ENCODE measurements at regions of chr19 and their contacts with region 1.

Region 1: GRCh38 chr19:45340232-45340898 is at the start of gene KLC3:
- DNase-seq: peak; percentile 53
- H3K4me3 ChIP-seq: peak within 1 kb of the TSS; percentile 59 to 88 (median 72)
- H3K27ac ChIP-seq: peak within 1 kb of the TSS; percentile 38
- H3K4me1 ChIP-seq: peaks cover 22% of the 10 kb centered on the region
- H3K27me3 ChIP-seq: no peaks in the 10 kb centered on the region
- CTCF ChIP-seq: no peak
- total RNA-seq, gene KLC3: 39.3 to 56.5 TPM

Region 2: DNA sequence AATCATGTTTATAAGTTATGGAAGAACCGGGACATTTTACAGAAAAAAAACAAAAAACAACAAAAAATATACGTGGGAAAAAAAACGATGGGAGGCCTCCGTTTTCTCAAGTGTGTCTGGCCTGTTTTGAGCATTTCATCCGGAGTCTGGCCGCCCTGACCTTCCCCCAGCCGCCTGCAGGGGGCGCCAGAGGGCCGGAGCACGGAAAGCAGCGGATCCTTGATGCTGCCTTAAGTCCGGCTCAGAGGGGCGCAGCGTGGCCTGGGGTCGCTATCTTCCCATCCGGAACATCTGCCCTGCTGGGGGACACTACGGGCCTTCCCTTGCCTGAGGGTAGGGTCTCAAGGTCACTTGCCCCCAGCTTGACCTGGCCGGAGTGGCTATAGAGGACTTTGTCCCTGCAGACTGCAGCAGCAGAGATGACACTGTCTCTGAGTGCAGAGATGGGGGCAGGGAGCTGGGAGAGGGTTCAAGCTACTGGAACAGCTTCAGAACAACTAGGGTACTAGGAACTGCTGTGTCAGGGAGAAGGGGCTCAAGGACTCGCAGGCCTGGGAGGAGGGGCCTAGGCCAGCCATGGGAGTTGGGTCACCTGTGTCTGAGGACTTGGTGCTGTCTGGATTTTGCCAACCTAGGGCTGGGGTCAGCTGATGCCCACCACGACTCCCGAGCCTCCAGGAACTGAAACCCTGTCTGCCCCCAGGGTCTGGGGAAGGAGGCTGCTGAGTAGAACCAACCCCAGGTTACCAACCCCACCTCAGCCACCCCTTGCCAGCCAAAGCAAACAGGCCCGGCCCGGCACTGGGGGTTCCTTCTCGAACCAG is 436.6 kb before region 1 on chr19:
- CTCF ChIA-PET with region 1: no interaction called
- dilution Hi-C with region 1: no loop called
- in situ Hi-C with region 1: no loop called
- intact Hi-C with region 1: loop called (anchors 2 kb)
- DNase-seq: no peak
- H3K4me3 ChIP-seq: no peak overlapping the region
- H3K27ac ChIP-seq: no peak overlapping the region
- H3K4me1 ChIP-seq: peaks cover 4% of the 10 kb centered on the region
- H3K27me3 ChIP-seq: no peaks in the 10 kb centered on the region
- CTCF ChIP-seq: peak; percentile 94 to 98

Region 3: GRCh38 chr19:45092747-45093678 is 247.4 kb before region 1 on chr19 and contains the start of gene PPP1R37:
- CTCF ChIA-PET with region 1: no interaction called
- dilution Hi-C with region 1: no loop called
- in situ Hi-C with region 1: no loop called
- intact Hi-C with region 1: loop called (anchors 5 kb)
- DNase-seq: peak; percentile 97
- H3K4me3 ChIP-seq: peak within 1 kb of the TSS; percentile 89 to 97 (median 95)
- H3K27ac ChIP-seq: peak within 1 kb of the TSS; percentile 94
- H3K4me1 ChIP-seq: peaks cover 31% of the 10 kb centered on the region
- H3K27me3 ChIP-seq: no peaks in the 10 kb centered on the region
- CTCF ChIP-seq: peak in 1 of 2 donors; percentile 31
- total RNA-seq, gene PPP1R37: 32.9 to 48.0 TPM

Region 4: GRCh38 chr19:45187421-45188100 is 152.8 kb before region 1 on chr19:
- CTCF ChIA-PET with region 1: no interaction called
- dilution Hi-C with region 1: no loop called
- in situ Hi-C with region 1: loop called in 1 of 2 experiments (anchors 25 kb)
- intact Hi-C with region 1: loop called (anchors 1 kb)
- DNase-seq: no peak
- H3K4me3 ChIP-seq: no peak overlapping the region
- H3K27ac ChIP-seq: no peak overlapping the region
- H3K4me1 ChIP-seq: peaks cover 8% of the 10 kb centered on the region
- H3K27me3 ChIP-seq: no peaks in the 10 kb centered on the region
- CTCF ChIP-seq: peak; percentile 57 to 59

Region 5: DNA sequence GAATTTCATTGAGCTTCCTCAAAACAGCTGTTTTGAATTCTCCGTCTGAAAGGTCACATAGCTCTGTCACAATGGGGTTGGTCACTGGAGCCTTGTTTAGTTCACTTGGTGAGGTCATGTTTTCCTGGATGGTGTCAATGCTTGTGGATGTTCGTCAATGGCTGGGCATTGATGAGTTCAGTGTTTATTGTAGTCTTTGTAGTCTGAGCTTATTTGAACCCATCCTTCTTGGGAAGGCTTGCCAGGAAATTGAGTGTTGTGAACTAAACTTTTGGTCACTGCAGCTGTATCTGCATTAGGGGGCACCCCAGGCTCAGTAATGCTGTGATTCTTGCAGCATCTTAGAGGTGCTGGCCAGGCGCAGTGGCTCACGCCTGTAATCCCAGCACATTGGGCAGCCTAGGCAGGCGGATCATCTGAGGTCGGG is 139.8 kb before region 1 on chr19:
- CTCF ChIA-PET with region 1: interaction called, 12 read pairs
- dilution Hi-C with region 1: no loop called
- in situ Hi-C with region 1: loop called in 1 of 2 experiments (anchors 25 kb)
- intact Hi-C with region 1: loop called (anchors 1 kb)
- DNase-seq: peak; percentile 30
- H3K4me3 ChIP-seq: no peak overlapping the region
- H3K27ac ChIP-seq: no peak overlapping the region
- H3K4me1 ChIP-seq: no peaks in the 10 kb centered on the region
- H3K27me3 ChIP-seq: no peaks in the 10 kb centered on the region
- CTCF ChIP-seq: peak; percentile 39 to 47

Region 6: GRCh38 chr19:45250832-45251451 is 89.4 kb before region 1 on chr19 and contains the start of gene MARK4:
- CTCF ChIA-PET with region 1: no interaction called
- dilution Hi-C with region 1: no loop called
- in situ Hi-C with region 1: no loop called
- intact Hi-C with region 1: loop called (anchors 1 kb)
- DNase-seq: peak; percentile 61
- H3K4me3 ChIP-seq: peak within 1 kb of the TSS; percentile 64 to 83 (median 76)
- H3K27ac ChIP-seq: peak within 1 kb of the TSS; percentile 48
- H3K4me1 ChIP-seq: peaks cover 31% of the 10 kb centered on the region
- H3K27me3 ChIP-seq: no peaks in the 10 kb centered on the region
- CTCF ChIP-seq: no peak
- total RNA-seq, gene MARK4: 13.3 to 48.9 TPM

Region 7: GRCh38 chr19:45391340-45391739 is 51.0 kb after region 1 on chr19:
- CTCF ChIA-PET with region 1: interaction called, 19 read pairs
- dilution Hi-C with region 1: no loop called
- in situ Hi-C with region 1: no loop called
- intact Hi-C with region 1: no loop called
- DNase-seq: peak; percentile 22
- H3K4me3 ChIP-seq: no peak overlapping the region
- H3K27ac ChIP-seq: no peak overlapping the region
- H3K4me1 ChIP-seq: no peaks in the 10 kb centered on the region
- H3K27me3 ChIP-seq: no peaks in the 10 kb centered on the region
- CTCF ChIP-seq: no peak